ENCODE measurements at regions of chr1 and their contacts with region 1.

Region 1: GRCh38 chr1:207052911-207053769 is at the start of gene PFKFB2:
- DNase-seq: peak; percentile 97 to 98
- H3K4me3 ChIP-seq: peak within 1 kb of the TSS; percentile 71 to 80
- H3K27ac ChIP-seq: peak within 1 kb of the TSS; percentile 90 to 92
- H3K4me1 ChIP-seq: peaks cover 9 to 14% of the 10 kb centered on the region in 2 donors
- H3K27me3 ChIP-seq: no peaks in the 10 kb centered on the region
- CTCF ChIP-seq: peak; percentile 31 to 36 (median 35)
- total RNA-seq, gene PFKFB2: 1.2 TPM

Region 2: DNA sequence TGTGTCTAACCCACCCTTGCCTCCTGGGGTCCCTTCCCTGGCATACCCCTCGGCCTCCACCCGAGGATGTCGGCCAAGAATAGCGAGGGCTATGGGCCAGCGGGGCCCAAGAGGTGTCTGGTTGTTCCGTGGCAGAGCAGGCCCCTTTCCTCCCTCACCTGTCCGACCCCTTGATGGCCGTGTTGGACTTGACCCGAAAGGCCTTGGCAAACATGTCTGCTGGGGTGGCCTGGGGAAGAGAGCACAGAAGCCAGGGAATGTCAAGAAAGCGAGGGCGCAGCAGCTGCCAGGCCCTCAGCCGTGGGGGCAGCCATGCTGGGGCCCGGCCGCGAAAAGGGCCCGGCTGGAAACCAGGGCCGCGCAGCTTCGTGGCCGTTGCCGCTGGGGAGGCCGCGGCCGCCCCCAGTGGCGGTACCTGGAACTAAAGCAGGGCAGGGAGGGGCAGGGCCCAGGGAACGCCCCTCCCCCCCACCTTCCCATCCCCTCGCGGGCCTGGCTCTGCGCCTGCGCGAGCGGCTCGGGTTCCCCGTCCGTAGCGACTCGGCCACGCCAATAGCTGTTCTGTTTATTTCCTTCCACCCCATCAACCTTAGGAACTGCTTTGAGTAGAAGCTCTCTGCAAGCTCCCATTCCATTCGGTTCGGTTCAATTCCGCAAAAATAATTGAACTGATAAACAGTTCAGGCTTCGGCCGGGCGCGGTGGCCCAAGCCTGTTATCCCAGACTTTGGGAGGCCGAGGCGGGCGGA is 440.8 kb before region 1 on chr1 and contains the start of gene EIF2D:
- intact Hi-C with region 1: loop called (anchors 1 kb)
- DNase-seq: peak; percentile 67 to 96
- H3K4me3 ChIP-seq: peak within 1 kb of the TSS; percentile 64 to 84
- H3K27ac ChIP-seq: peak within 1 kb of the TSS; percentile 84 to 85
- H3K4me1 ChIP-seq: peaks cover 3 to 11% of the 10 kb centered on the region in 2 donors
- H3K27me3 ChIP-seq: no peaks in the 10 kb centered on the region
- CTCF ChIP-seq: peak; percentile 98 to 99 (median 99)
- total RNA-seq, gene EIF2D: 40.2 TPM

Region 3: GRCh38 chr1:206912445-206913095 is 140.6 kb before region 1 on chr1:
- intact Hi-C with region 1: loop called (anchors 10 kb)
- DNase-seq: peak in 1 of 2 donors; percentile 79
- H3K4me3 ChIP-seq: no peak overlapping the region
- H3K27ac ChIP-seq: no peak overlapping the region
- H3K4me1 ChIP-seq: peaks cover 0 to 10% of the 10 kb centered on the region in 2 donors
- H3K27me3 ChIP-seq: peaks cover 10% of the 10 kb centered on the region
- CTCF ChIP-seq: peak; percentile 72 to 82 (median 78)

Region 4: DNA sequence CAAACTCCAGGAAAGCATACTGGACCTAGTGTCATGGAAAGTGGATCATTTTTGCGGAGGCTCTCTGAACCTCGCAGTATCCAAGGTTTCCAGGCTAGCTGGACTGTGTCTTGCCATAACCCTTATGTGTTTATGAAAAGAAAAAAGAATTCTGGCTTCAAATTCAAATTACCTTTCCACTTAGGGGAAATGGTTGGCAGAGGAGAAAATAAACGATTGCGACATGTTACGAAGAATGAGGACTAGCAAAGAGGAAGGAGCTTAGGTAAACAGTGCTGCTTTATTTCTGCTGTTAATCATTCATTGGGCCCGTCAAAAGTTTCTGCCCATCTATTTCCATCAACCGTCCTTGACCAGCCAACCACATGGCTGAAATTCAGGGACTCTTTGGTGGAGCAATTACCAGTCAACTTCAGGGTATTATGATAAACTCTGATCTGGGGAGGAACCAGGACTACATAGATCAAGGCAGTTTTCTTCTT is 50.8 kb after region 1 on chr1 and contains the start of gene C4BPA:
- intact Hi-C with region 1: no loop called
- DNase-seq: no peak
- H3K4me3 ChIP-seq: no peak within 1 kb of the TSS
- H3K27ac ChIP-seq: no peak within 1 kb of the TSS
- H3K4me1 ChIP-seq: no peaks in the 10 kb centered on the region
- H3K27me3 ChIP-seq: no peaks in the 10 kb centered on the region
- CTCF ChIP-seq: no peak
- total RNA-seq, gene C4BPA: not detected

Region 5: DNA sequence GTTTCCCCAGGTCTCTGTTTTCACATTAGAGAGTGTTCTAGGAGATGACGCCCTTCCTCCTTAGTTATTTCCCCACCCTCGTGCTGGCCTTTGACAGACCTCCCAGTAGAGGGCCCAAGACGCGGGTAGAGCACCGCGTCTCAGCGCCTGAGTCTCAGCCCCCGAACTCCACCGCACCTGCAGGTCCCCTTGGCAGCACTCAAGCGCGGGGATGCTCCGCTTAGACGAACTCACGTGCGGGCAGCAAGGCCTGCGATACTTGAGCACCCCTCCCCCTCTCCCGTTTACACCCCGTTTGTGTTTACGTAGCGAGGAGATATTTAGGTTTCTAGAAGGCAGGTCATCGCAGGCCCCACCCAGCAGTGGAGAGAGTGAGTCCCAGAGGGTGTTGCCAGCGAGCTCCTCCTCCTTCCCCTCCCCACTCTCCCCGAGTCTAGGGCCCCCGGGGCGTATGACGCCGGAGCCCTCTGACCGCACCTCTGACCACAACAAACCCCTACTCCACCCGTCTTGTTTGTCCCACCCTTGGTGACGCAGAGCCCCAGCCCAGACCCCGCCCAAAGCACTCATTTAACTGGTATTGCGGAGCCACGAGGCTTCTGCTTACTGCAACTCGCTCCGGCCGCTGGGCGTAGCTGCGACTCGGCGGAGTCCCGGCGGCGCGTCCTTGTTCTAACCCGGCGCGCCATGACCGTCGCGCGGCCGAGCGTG is 268.1 kb after region 1 on chr1 and contains the start of gene CD55:
- intact Hi-C with region 1: loop called (anchors 5 kb)
- DNase-seq: peak; percentile 96 to 99
- H3K4me3 ChIP-seq: peak within 1 kb of the TSS; percentile 89 to 93
- H3K27ac ChIP-seq: peak within 1 kb of the TSS; percentile 86 to 91
- H3K4me1 ChIP-seq: no peaks in the 10 kb centered on the region
- H3K27me3 ChIP-seq: no peaks in the 10 kb centered on the region
- CTCF ChIP-seq: no peak
- total RNA-seq, gene CD55: 73.1 TPM

Region 6: GRCh38 chr1:207719234-207719633 is 666.1 kb after region 1 on chr1:
- intact Hi-C with region 1: no loop called
- DNase-seq: no peak
- H3K4me3 ChIP-seq: no peak overlapping the region
- H3K27ac ChIP-seq: no peak overlapping the region
- H3K4me1 ChIP-seq: no peaks in the 10 kb centered on the region
- H3K27me3 ChIP-seq: no peaks in the 10 kb centered on the region
- CTCF ChIP-seq: no peak

Region 7: DNA sequence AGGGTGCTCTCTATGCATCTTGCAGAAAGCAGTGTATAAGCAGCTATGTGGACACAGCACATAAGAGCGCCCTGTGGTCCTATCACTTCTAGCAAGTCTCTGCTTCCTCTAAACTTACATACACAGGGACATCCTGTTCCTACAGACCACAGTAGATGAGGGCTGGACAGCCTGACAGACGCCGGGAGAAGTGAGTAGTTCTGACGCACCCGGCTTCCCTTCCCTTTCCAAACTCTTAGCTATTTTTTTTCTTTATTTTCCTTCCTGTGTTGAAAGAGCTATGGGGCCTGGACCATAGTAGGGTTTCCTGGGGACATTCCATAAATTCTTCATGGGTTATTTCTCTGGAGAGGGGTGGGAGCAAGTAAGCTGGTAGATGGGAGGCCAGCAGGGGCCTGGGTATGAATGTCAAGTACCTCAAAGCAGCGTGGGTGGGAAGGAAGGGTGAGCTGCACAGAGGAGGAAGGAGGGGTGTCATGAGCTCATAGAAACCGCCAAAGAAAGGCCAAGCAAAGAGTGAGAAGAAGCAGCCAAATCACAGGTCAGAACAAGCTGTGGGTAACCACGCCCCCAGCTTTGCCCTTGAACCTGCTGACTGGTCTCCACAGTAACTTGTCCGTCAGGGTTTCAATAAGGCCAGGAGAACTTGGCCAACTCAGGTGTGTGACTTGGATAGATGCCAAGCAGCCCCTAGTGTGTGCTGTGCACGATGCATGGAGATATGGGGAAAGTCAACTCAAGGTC is 1154.4 kb after region 1 on chr1:
- intact Hi-C with region 1: loop called (anchors 10 kb)
- DNase-seq: peak; percentile 55 to 90
- H3K4me3 ChIP-seq: no peak overlapping the region
- H3K27ac ChIP-seq: peak overlapping the region; percentile 59 to 92
- H3K4me1 ChIP-seq: peaks cover 23 to 57% of the 10 kb centered on the region in 2 donors
- H3K27me3 ChIP-seq: no peaks in the 10 kb centered on the region
- CTCF ChIP-seq: no peak